HAP-1 (cell line): ENCODE measurements at regions of chr5 and their contacts with region 1.

Region 1: GRCh38 chr5:175444060-175444904 is at the start of gene DRD1:
- DNase-seq: peak in 1 of 2 experiments; percentile 53
- H3K4me3 ChIP-seq: no peak within 1 kb of the TSS
- H3K4me1 ChIP-seq: no peaks in the 10 kb centered on the region
- H3K27me3 ChIP-seq: peaks cover 62% of the 10 kb centered on the region

Region 2: DNA sequence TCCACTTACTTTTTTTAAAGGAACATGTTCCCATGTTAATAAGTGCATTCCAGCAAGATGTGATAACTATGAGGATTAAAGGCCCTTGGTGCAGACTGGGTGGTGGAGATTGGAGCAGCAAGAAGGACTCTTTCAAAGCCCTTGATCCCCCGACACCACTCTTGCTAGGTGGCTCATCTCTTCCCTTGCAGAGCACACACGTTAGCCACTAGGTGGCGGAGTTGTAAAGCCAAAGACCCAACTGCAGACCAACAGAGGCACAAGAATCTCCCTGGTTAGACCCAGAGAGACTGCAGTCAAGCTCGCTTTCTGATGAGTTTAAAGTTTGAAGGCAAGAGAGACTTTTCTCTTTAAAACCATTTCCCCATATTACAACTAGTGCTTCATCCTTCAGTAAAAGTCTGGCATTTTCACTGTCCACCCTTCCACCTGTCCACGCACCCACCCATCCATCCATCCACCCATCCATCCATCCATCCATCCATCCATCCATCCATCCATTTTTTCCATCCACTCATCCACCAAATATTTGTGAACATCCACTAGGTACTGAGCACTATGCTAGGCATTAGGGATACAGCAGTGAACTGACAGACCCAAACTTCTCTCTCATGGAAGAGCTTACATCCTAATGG is 493.0 kb before region 1 on chr5:
- in situ Hi-C with region 1: loop called (anchors 10 kb)
- DNase-seq: peak; percentile 56 to 65
- H3K4me3 ChIP-seq: no peak overlapping the region
- H3K4me1 ChIP-seq: no peaks in the 10 kb centered on the region
- H3K27me3 ChIP-seq: no peaks in the 10 kb centered on the region

Region 3: GRCh38 chr5:175638305-175638704 is 194.0 kb after region 1 on chr5:
- in situ Hi-C with region 1: no loop called
- DNase-seq: peak; percentile 37 to 68
- H3K4me3 ChIP-seq: no peak overlapping the region
- H3K4me1 ChIP-seq: peaks cover 7% of the 10 kb centered on the region; the same call in 1 of the 2 replicates
- H3K27me3 ChIP-seq: no peaks in the 10 kb centered on the region